ENCODE measurements at regions of chr21 and their contacts with region 1.

Region 1: DNA sequence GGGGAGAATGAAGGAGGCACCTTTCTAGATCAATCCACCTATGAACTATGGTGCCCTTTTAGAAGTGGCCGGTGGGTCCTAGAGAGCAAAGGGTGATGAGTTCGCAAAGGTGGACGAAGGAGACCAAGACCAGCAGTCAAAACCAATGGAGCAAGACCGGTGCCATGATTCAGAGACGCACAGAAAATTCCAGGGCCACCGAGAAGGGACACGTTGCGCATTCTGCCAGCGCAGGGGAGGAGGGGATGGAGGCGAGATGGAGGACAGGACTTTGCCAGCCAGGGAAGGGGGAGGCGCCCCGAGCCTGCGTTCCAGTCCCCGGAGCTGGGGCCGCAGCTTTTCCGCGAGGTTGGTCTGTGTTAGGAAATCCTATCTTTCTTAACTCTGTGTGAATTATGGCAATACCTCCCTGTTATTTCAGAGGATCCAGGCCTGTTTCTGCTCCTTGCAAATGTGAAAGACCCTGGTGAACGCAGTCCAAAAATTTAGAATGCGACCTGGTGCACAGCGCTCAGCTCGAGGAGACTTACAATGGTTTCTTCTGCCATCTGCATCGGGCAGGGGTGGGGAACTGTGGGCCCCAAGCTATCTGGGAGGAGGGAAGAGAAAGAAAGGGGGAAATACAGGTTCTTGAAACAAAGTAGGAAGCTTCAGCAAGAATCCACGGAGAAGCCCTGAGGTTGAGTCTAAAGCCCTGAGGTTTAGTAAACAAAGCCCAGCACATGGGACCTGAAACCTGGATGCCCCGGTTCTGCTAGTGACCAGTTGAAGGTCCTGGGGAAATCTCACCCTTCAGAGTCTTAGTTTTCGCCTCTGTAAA is 129.4 kb downstream of the MRPS6 start:
- DNase-seq: peak; percentile 82 to 87 (median 86)
- ATAC-seq: peak; percentile 64 to 68
- H3K4me3 ChIP-seq: peak overlapping the region; percentile 59
- H3K27ac ChIP-seq: peak overlapping the region; percentile 93
- H3K4me1 ChIP-seq: peaks cover 8% of the 10 kb centered on the region
- H3K27me3 ChIP-seq: no peaks in the 10 kb centered on the region

Region 2: GRCh38 chr21:33815143-33815707 is 387.5 kb before region 1 on chr21:
- intact Hi-C with region 1: no loop called
- DNase-seq: no peak
- ATAC-seq: no peak
- H3K4me3 ChIP-seq: no peak overlapping the region
- H3K27ac ChIP-seq: no peak overlapping the region
- H3K4me1 ChIP-seq: peaks cover 7% of the 10 kb centered on the region
- H3K27me3 ChIP-seq: no peaks in the 10 kb centered on the region

Region 3: GRCh38 chr21:33924079-33924765 is 278.5 kb before region 1 on chr21:
- intact Hi-C with region 1: loop called in 1 of 4 experiments (anchors 5 kb)
- DNase-seq: peak; percentile 86 to 95 (median 92)
- ATAC-seq: peak; percentile 94 to 96
- H3K4me3 ChIP-seq: no peak overlapping the region
- H3K27ac ChIP-seq: no peak overlapping the region
- H3K4me1 ChIP-seq: no peaks in the 10 kb centered on the region
- H3K27me3 ChIP-seq: no peaks in the 10 kb centered on the region

Region 4: GRCh38 chr21:33947451-33948095 is 255.2 kb before region 1 on chr21:
- intact Hi-C with region 1: loop called in 1 of 4 experiments (anchors 10 kb)
- DNase-seq: peak; percentile 71 to 83 (median 72)
- ATAC-seq: peak; percentile 92 to 97
- H3K4me3 ChIP-seq: no peak overlapping the region
- H3K27ac ChIP-seq: peak overlapping the region; percentile 47
- H3K4me1 ChIP-seq: peaks cover 17% of the 10 kb centered on the region
- H3K27me3 ChIP-seq: no peaks in the 10 kb centered on the region

Region 5: GRCh38 chr21:34061983-34062382 is 140.8 kb before region 1 on chr21:
- intact Hi-C with region 1: no loop called
- DNase-seq: no peak
- ATAC-seq: no peak
- H3K4me3 ChIP-seq: no peak overlapping the region
- H3K27ac ChIP-seq: no peak overlapping the region
- H3K4me1 ChIP-seq: no peaks in the 10 kb centered on the region
- H3K27me3 ChIP-seq: no peaks in the 10 kb centered on the region

Region 6: GRCh38 chr21:34073032-34073869 is 129.5 kb before region 1 on chr21 and contains the starts of genes MRPS6 and SLC5A3:
- intact Hi-C with region 1: loop called in 2 of 4 experiments (anchors 5 kb)
- DNase-seq: peak; percentile 88 to 95 (median 94)
- ATAC-seq: peak; percentile 90 to 92
- H3K4me3 ChIP-seq: peak within 1 kb of the TSS; percentile 68
- H3K27ac ChIP-seq: peak within 1 kb of the TSS; percentile 76
- H3K4me1 ChIP-seq: peaks cover 7% of the 10 kb centered on the region
- H3K27me3 ChIP-seq: no peaks in the 10 kb centered on the region
- total RNA-seq, gene MRPS6: 67.6 to 78.1 (median 73.1) TPM
- total RNA-seq, gene SLC5A3: 4.1 to 11.7 (median 6.7) TPM

Region 7: DNA sequence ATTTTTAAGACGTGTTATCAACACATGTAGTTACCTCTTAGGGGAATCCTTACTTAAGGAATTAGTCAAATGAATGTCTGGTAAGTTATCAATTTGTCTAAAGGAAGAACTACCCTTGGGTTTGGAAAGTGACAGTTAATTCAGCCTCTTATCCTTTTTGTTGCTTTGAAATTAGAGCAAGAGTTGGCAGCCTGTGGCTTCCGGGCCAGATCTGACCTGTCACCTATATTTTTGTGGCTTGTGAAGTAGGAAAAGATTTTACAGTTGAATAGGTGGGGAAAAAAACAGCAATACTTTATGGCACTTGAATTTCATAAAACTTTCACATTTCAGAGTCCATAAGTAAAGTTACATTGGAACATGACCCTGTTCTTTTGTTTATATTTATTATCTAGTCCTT is 123.8 kb before region 1 on chr21:
- intact Hi-C with region 1: loop called in 2 of 4 experiments (anchors 5 kb)
- DNase-seq: no peak
- ATAC-seq: no peak
- H3K4me3 ChIP-seq: no peak overlapping the region
- H3K27ac ChIP-seq: no peak overlapping the region
- H3K4me1 ChIP-seq: peaks cover 13% of the 10 kb centered on the region
- H3K27me3 ChIP-seq: no peaks in the 10 kb centered on the region